Dorsolateral prefrontal cortex (tissue), 120 donors: ENCODE measurements at regions of chr1 and their contacts with region 1.

Region 1: GRCh38 chr1:203871107-203871875 is 9.9 kb downstream of the SNRPE start:
- DNase-seq: peak in 6 of 10 donors; percentile 17 to 57 (median 38)
- H3K4me3 ChIP-seq: peak overlapping the region in 5 of 59 donors; percentile 11 to 21 (median 12)
- H3K27ac ChIP-seq: peak overlapping the region in 57 of 59 donors; percentile 1 to 85 (median 69)
- H3K27me3 ChIP-seq: no peaks in the 10 kb centered on the region
- CTCF ChIP-seq: peak; percentile 77 to 98 (median 90)

Region 2: GRCh38 chr1:203996126-203996525 is 124.8 kb after region 1 on chr1:
- intact Hi-C with region 1: loop called (anchors 5 kb)
- DNase-seq: peak in 8 of 10 donors; percentile 6 to 59 (median 50)
- H3K4me3 ChIP-seq: peak overlapping the region in 12 of 59 donors; percentile 4 to 42 (median 16)
- H3K27ac ChIP-seq: peak overlapping the region in 51 of 59 donors; percentile 2 to 83 (median 69)
- H3K27me3 ChIP-seq: no peaks in the 10 kb centered on the region
- CTCF ChIP-seq: no peak

Region 3: DNA sequence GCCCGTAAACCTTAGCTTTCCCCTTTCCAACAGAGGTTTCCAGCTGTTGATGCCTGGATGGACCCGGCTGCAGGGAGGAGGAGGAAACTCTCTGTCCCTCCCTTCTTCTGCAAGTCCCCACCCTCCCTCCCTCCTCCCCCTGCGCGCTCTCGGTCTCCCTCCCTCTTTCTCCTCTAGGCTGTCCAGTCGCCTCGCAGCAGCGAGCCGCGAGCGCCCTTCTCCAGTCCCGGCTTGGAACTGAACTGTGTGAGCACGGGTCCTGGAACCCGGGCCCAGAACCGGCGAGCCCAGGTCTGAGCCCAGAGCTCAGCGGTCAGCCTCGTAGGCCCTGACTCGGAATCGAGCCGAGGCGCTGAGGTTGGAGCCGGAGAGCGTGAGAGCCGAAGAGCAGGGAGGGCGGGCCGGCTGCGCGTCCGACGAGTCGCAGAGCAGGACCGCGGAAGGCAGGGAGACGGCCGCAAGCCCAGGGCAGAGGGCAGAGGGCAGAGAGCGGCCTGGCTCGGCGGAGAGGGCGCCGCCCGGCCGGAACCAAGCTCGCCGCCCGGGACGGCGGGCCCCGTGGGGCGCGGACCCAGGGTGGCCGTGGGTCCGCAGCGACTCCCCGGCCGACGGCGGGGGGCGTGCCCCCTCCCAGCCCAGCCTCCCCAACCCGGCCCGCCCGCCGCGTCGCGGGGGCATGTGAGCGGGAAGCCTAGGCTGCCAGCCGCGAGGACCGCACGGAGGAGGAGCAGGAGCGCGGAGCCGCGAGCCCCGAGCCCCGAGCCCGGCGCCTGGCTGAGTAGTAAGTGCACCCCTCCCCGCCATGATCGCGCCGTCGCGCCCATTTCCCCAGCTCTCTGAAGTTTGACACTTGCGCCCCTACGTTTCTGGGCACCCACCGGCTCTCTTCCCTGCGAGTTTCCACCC is 201.9 kb after region 1 on chr1 and contains the start of gene SOX13:
- intact Hi-C with region 1: loop called (anchors 1 to 2 kb)
- DNase-seq: peak; percentile 74 to 90 (median 86)
- H3K4me3 ChIP-seq: peak within 1 kb of the TSS; percentile 60 to 95 (median 76)
- H3K27ac ChIP-seq: peak within 1 kb of the TSS in 58 of 59 donors; percentile 34 to 92 (median 84)
- H3K27me3 ChIP-seq: no peaks in the 10 kb centered on the region
- CTCF ChIP-seq: peak in 38 of 56 donors; percentile 4 to 55 (median 32)
- total RNA-seq, gene SOX13: 13.7 to 62.1 (median 24.8) TPM

Region 4: GRCh38 chr1:204128964-204129896 is 257.9 kb after region 1 on chr1:
- intact Hi-C with region 1: loop called (anchors 1 to 2 kb)
- DNase-seq: peak in 9 of 10 donors; percentile 43 to 80 (median 58)
- H3K4me3 ChIP-seq: peak overlapping the region in 16 of 59 donors; percentile 8 to 35 (median 20)
- H3K27ac ChIP-seq: peak overlapping the region in 9 of 59 donors; percentile 0 to 65 (median 23)
- H3K27me3 ChIP-seq: no peaks in the 10 kb centered on the region
- CTCF ChIP-seq: peak; percentile 62 to 98 (median 93)

Region 5: DNA sequence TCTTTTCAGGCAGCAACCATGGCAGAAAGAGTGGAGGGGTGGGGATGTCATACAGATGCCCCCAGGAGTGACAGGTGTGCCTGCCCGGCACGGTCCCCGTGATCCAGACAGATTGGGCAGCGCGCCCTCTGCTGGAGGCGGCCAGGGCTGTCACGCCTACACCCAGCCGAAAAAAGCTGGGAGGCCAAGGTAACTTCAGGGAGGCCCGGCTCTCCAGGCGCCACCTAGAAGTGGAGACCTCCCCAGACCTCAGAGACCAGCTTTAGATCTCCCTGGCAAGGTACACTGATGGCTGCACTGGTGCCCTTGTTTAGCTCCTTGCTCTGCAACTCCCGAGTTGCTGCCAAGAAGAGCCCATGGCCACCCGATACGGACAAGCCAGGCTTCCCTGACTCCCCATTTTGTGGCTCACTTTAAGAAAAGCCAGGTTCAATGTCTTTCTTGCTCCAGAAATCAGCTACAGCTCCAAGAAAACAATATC is 335.9 kb after region 1 on chr1:
- intact Hi-C with region 1: loop called in 1 of 2 experiments (anchors 5 kb)
- DNase-seq: peak in 9 of 10 donors; percentile 60 to 80 (median 66)
- H3K4me3 ChIP-seq: peak overlapping the region in 6 of 59 donors; percentile 8 to 32 (median 14)
- H3K27ac ChIP-seq: peak overlapping the region in 20 of 59 donors; percentile 0 to 68 (median 30)
- H3K27me3 ChIP-seq: peaks cover 0 to 7% (median 0%) of the 10 kb centered on the region in 45 donors
- CTCF ChIP-seq: peak; percentile 61 to 94 (median 87)